GM23248 (cell line): ENCODE measurements at regions of chr17 and their contacts with region 1.

Region 1: DNA sequence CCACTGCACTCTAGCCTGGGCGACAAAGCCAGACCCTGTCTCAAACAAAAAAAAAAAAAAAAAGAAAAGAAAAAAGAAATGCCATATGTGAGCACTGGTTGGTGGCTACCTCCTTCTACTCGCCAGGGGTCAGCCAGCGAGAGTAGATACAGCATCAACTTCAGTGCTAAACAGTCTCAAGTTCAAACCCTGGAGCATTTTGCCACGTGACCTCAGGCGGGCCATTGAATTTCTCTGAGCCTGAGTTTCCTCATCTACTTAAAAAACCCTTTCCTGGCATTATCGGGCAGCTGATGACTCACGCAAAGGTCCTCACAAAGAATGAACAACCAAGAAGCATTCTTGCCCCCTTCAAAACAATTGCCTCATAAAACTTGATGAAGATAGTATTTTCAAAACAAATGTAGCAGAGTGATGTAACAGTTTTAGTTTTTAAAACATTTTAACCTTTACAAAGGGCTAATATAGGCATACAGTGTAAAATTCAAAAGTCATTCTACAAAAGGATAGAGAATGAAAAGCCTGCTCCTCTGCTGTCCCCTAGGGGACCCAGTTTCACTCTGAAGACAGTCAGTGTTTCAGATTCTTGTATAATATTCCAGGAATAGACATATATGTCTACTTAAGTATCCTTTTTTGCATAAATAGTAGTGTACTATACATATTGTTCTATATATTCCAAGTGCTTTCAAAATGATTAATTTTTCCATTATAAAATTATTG is 28.4 kb downstream of the DNAH2 start:
- DNase-seq: peak; percentile 92
- H3K4me3 ChIP-seq: peak overlapping the region; percentile 19; the same call in 1 of the 2 replicates
- H3K27ac ChIP-seq: peak overlapping the region; percentile 30
- H3K4me1 ChIP-seq: peaks cover 50% of the 10 kb centered on the region
- H3K27me3 ChIP-seq: 0 out of 2 replicates have a peak, but pooled peaks cover under 1% of the 10 kb centered on the region

Region 2: GRCh38 chr17:7548585-7549400 is 197.1 kb before region 1 on chr17 and contains the start of gene TNFSF12:
- in situ Hi-C with region 1: no loop called
- DNase-seq: peak; percentile 66
- H3K4me3 ChIP-seq: peak within 1 kb of the TSS; percentile 79
- H3K27ac ChIP-seq: no peak within 1 kb of the TSS
- H3K4me1 ChIP-seq: no peaks in the 10 kb centered on the region
- H3K27me3 ChIP-seq: no peaks in the 10 kb centered on the region
- total RNA-seq, gene TNFSF12: 21.9 and 34.3 TPM in 2 replicates

Region 3: DNA sequence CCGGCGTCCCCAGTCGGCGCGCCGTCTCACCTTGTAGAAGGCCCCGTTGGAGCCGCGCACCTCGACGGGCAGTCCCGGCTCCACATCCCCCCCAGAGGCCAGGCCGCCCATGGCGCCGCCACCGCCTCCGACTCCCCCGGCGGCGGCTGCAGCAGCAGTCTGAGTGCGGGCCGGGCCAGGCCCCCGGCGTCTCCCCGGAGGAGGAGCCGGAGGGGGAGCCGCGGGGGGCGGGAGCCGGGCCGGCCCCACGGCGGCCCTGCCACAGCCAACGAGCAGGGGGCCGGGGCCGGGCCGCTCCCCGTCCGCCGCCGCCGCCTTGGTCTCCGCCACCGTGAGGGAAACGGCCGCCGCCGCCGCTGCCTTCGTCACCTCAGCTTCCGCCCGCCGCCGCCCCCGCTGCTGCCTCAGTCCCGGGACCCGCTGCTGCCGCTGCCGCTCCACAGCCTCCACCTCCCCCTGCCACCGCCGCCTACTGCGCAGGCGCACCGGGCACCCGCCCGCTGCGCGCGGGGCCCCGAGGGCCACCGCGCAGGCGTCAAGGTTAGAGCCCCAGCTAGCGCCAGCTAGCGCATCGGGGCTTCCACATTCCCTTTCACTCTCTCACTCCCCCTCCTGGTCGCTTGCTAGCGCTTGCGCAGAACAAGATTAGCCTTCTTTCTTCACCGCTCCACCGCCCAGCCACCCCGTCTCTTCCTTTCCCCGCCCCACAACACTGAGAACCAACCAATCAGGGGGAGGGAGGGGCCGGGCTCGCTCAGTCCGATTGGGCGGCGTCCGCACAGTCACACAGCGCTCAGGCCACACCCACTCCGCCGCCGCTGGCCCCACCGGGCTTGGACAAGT is 131.3 kb before region 1 on chr17 and contains the start of gene FXR2:
- in situ Hi-C with region 1: no loop called
- DNase-seq: peak; percentile 100
- H3K4me3 ChIP-seq: peak within 1 kb of the TSS; percentile 85
- H3K27ac ChIP-seq: peak within 1 kb of the TSS; percentile 82
- H3K4me1 ChIP-seq: peaks cover 26% of the 10 kb centered on the region
- H3K27me3 ChIP-seq: no peaks in the 10 kb centered on the region
- total RNA-seq, gene FXR2: 44.5 and 57.1 TPM in 2 replicates

Region 4: GRCh38 chr17:7856883-7857723 is 111.2 kb after region 1 on chr17 and contains the start of gene NAA38:
- in situ Hi-C with region 1: loop called (anchors 10 kb)
- DNase-seq: peak; percentile 100
- H3K4me3 ChIP-seq: peak within 1 kb of the TSS; percentile 80
- H3K27ac ChIP-seq: peak within 1 kb of the TSS; percentile 88
- H3K4me1 ChIP-seq: 0 out of 2 replicates have a peak, but pooled peaks cover 17% of the 10 kb centered on the region
- H3K27me3 ChIP-seq: no peaks in the 10 kb centered on the region
- total RNA-seq, gene NAA38: 70.4 and 71.5 TPM in 2 replicates